PC-3 (cell line): ENCODE measurements at regions of chr7 and their contacts with region 1.

Region 1: DNA sequence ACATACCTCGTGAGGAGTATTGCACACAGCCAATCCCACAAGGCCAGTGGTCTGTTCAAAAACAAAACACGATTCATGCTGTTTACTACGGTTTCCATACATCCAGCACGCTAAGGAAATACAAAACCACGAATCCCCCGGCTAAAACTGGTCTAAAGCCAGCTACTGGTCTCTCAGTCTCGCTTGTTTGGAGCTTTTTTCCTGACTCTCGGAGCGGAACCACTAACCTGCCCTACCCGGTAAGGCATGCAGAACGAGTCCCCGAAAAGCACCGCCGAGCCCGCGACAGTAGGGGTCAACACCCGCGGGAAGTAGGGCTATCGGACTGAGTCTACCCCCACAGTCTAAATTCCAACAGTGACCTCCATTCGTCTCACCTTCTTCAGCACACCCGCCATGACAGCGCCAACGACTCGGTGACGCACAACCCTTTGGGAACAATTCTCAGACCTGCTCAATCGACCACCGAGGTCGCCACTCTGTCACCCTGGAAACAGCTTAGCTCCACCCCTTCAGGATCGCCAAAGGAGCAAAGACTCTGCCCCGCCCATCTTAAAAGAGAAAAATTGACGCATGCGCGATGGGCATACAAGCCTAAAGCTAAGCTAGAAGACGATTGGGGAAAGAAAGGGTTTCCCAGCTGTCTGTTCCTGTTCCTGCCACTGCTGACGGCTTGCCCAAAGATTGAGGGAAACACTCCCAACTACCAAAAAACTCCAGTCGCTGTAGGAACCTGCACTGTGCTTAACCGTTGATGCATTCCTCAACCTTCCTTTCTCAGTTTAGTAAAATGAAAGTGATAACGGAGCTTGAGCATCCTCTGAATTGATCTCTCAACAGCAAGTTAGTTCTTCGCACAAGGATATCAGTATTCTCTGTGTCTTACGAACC is at the start of gene NDUFA5:
- DNase-seq: peak; percentile 98
- ATAC-seq: peak; percentile 98
- H3K4me3 ChIP-seq: peak within 1 kb of the TSS; percentile 92
- H3K27ac ChIP-seq: peak within 1 kb of the TSS; percentile 62
- H3K4me1 ChIP-seq: 0 out of 2 replicates have a peak, but pooled peaks cover 5% of the 10 kb centered on the region
- H3K27me3 ChIP-seq: no peaks in the 10 kb centered on the region
- CTCF ChIP-seq: no peak
- total RNA-seq, gene NDUFA5: 42.7 and 46.9 TPM in 2 replicates

Region 2: GRCh38 chr7:123534383-123535260 is 23.0 kb before region 1 on chr7 and contains the start of gene IQUB:
- CTCF ChIA-PET with region 1: interaction called, 4 read pairs
- POLR2A ChIA-PET with region 1: no interaction called
- intact Hi-C with region 1: loop called (anchors 1 kb)
- DNase-seq: peak; percentile 93
- ATAC-seq: peak; percentile 77
- H3K4me3 ChIP-seq: peak within 1 kb of the TSS; percentile 73
- H3K27ac ChIP-seq: no peak within 1 kb of the TSS
- H3K4me1 ChIP-seq: peaks cover 27% of the 10 kb centered on the region
- H3K27me3 ChIP-seq: peaks cover 17% of the 10 kb centered on the region
- CTCF ChIP-seq: no peak
- total RNA-seq, gene IQUB: 0.04 and 0.06 TPM in 2 replicates